ENCODE measurements at regions of chr9 and their contacts with region 1.

Region 1: GRCh38 chr9:133149126-133150107 is 14.3 kb downstream of the GBGT1 start:
- DNase-seq: peak; percentile 84 to 96
- H3K4me3 ChIP-seq: peak overlapping the region; percentile 61
- H3K27ac ChIP-seq: peak overlapping the region; percentile 57
- H3K4me1 ChIP-seq: peaks cover 21% of the 10 kb centered on the region
- H3K27me3 ChIP-seq: no peaks in the 10 kb centered on the region
- CTCF ChIP-seq: no peak; the same call in 1 of the 2 replicates

Region 2: DNA sequence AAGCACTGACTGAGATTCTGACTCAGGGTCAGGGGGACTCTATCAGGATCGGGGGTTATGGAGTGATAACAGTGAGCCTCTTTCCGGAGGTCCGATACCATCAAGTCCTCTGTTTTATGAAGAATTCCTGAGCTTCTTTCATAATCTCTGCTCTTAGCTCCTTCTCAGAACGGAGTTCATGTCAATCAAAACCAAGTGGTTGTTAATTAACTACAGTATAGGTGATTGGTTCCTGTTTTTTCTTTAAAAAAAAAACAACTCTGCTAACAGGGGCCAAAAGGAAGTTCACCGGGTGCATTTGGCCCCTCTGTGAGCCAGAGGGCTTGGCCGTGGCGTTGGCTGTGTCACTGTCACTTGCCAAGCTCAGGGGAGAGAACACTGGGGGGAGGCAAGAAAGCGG is 167.0 kb before region 1 on chr9:
- CTCF ChIA-PET with region 1: interaction called, 3 read pairs
- POLR2A ChIA-PET with region 1: interaction called, 10 read pairs
- intact Hi-C with region 1: no loop called
- DNase-seq: no peak
- H3K4me3 ChIP-seq: no peak overlapping the region
- H3K27ac ChIP-seq: no peak overlapping the region
- H3K4me1 ChIP-seq: no peaks in the 10 kb centered on the region
- H3K27me3 ChIP-seq: peaks cover 96% of the 10 kb centered on the region
- CTCF ChIP-seq: no peak

Region 3: DNA sequence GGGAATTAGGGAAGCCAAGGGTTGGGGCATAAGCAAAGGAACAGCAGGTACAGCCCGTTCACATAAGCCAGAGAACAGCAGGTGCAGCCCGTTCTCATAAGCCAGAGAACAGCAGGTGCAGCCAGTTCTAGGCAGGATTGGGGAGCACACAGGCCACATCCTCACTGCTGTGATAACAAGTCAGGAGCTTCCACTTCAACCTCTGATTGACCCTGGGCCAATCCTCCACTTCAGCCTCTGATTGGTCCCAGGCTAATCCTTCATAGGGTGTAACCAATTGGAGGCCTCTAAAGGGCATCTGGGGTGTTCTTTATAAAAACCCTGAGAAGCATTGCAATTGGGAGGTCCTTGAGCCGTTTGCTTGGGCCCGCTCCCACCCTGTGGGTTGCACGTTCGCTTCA is 60.1 kb before region 1 on chr9:
- CTCF ChIA-PET with region 1: no interaction called
- POLR2A ChIA-PET with region 1: no interaction called
- intact Hi-C with region 1: no loop called
- DNase-seq: no peak
- H3K4me3 ChIP-seq: no peak overlapping the region
- H3K27ac ChIP-seq: no peak overlapping the region
- H3K4me1 ChIP-seq: no peaks in the 10 kb centered on the region
- H3K27me3 ChIP-seq: no peaks in the 10 kb centered on the region
- CTCF ChIP-seq: no peak

Region 4: GRCh38 chr9:133121198-133121939 is 28.0 kb before region 1 on chr9 and contains the start of gene RALGDS:
- CTCF ChIA-PET with region 1: interaction called, 6 read pairs
- POLR2A ChIA-PET with region 1: interaction called, 27 read pairs
- intact Hi-C with region 1: loop called (anchors 1 kb)
- DNase-seq: peak; percentile 85 to 87
- H3K4me3 ChIP-seq: peak within 1 kb of the TSS; percentile 67
- H3K27ac ChIP-seq: peak within 1 kb of the TSS; percentile 64
- H3K4me1 ChIP-seq: peaks cover 15% of the 10 kb centered on the region
- H3K27me3 ChIP-seq: no peaks in the 10 kb centered on the region
- CTCF ChIP-seq: no peak
- total RNA-seq, gene RALGDS: 24.8 and 30.0 TPM in 2 replicates

Region 5: DNA sequence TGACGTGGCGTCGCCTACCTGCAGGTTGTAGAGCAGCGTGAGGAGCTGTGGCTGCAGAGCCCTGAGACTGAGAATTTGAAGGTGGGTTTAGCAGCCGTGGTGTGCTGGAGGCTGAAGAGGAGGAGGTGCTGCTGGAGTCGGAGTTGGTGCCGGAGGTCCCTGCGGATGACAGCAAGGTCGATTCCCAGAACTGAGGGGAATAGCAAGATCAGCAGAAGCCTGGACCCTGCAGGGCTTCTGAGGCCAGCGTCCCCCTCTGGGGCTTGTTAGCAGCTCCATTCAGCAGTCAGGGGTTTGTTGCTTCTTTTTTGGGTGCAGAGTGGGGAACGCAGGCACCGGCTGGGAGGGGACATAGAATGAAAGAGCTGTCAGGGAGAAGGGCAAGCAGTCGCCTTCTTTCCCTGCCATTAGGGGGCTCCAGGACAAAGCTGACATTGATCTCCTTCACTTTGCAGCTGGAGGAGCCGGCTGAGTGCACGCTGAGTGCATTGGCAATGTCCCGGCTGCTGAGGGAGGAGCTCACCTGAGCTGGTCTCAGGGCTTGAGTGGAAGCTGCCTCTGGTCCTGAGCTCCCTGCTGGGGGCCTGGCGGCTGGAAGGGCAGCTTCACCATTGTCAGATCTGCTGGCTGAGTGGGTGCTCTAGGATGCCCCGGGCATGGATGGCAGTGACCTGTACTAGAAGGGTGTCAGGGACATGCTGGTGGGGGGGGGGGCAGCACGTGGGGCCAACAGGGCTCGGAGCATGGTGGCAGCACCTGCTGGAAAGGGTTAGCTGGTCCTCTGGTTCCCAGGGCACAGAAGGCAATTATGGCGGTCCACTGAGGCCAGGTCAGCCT is 38.8 kb after region 1 on chr9:
- CTCF ChIA-PET with region 1: no interaction called
- POLR2A ChIA-PET with region 1: no interaction called
- intact Hi-C with region 1: no loop called
- DNase-seq: peak; percentile 40 to 61
- H3K4me3 ChIP-seq: no peak overlapping the region
- H3K27ac ChIP-seq: no peak overlapping the region
- H3K4me1 ChIP-seq: no peaks in the 10 kb centered on the region
- H3K27me3 ChIP-seq: peaks cover 62% of the 10 kb centered on the region
- CTCF ChIP-seq: peak; percentile 49; the same call in 1 of the 2 replicates

Region 6: GRCh38 chr9:133210202-133210532 is 60.8 kb after region 1 on chr9:
- CTCF ChIA-PET with region 1: no interaction called
- POLR2A ChIA-PET with region 1: no interaction called
- intact Hi-C with region 1: no loop called
- DNase-seq: peak in 1 of 2 experiments; percentile 61
- H3K4me3 ChIP-seq: no peak overlapping the region
- H3K27ac ChIP-seq: no peak overlapping the region
- H3K4me1 ChIP-seq: peaks cover 15% of the 10 kb centered on the region; the same call in 1 of the 2 replicates
- H3K27me3 ChIP-seq: peaks cover 14% of the 10 kb centered on the region
- CTCF ChIP-seq: no peak

Measured in PC-9 (cell line).